Transverse colon (tissue), 4 donors: ENCODE measurements at regions of chr6 and their contacts with region 1.

Region 1: DNA sequence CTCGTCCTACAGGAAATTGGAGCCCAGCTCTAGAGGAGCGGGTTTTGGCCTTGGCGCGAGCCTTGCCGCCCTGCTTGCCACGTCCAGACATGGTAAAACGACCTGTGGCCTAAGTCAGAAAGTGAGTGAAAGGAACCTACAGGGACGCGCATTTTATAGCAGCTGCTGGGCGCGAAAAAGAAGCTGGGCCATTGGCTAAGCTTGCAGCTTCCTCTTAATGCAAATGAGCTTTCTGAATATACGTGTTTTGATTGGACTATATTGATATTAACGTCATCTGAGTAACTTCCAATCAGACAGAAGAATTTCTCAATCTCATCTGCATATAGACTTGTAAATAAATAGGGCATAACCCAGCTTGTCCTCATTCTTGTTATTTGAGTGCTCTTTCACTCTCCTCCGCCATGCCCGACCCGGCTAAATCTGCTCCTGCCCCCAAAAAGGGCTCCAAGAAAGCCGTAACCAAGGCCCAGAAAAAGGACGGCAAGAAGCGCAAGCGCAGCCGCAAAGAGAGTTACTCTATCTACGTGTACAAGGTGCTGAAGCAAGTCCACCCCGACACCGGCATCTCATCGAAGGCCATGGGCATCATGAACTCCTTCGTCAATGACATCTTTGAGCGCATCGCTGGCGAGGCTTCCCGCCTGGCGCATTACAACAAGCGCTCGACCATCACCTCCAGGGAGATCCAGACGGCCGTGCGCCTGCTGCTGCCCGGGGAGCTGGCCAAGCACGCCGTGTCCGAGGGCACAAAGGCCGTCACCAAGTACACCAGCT is 18.9 kb downstream of the OR2B2 start:
- DNase-seq: peak; percentile 93
- H3K4me3 ChIP-seq: peak overlapping the region; percentile 23 to 80 (median 63)
- H3K27ac ChIP-seq: peak overlapping the region; percentile 90 to 96 (median 92)
- H3K4me1 ChIP-seq: peaks cover 0 to 54% (median 22%) of the 10 kb centered on the region in 4 donors
- H3K27me3 ChIP-seq: peaks cover 47% of the 10 kb centered on the region
- CTCF ChIP-seq: peak in 1 of 5 experiments; percentile 28
- EP300 ChIP-seq: no peak
- POLR2A ChIP-seq: peak; percentile 99

Region 2: DNA sequence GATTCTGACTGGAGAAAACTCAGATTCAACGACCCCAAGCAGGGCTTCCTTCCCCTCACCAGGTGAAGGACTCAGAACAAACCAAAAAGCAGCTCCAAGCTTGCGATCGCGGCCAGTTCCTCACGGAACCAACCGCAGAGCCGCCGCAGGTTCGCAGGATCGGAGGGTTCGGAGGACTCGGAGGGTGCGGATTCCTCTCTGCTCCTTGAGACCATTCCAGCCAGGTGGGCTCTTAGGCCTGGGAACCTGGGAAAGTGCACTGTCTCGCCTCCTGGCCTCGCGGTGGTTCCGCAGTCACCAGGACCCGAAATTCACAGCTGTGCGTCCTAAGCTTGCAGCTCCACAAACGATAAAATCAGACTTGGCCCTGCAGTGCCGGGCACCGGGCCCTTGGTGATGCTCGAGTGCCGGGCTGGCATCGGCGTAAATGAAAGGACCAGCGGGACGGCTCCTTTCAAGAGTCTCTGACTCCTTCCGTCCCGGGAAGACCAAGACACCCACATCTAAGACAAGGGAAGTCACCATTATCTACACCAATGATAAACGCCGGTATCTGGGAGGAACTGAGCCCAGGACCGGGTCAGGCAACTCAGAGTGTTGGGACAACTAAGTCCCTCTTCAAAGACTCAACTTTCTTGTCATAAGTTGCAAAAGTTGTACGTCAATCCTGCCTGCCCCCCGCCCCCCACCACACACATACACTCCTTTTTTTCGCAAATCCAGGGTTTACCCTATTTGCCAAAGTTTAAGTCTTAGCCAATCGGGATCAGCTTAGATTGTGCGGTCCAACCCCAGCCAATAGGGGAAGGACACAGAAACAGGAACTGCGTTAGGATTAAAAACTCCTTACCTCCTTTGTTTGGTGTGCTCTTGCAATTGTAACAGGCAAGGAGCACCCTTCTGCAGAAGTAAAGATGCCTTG is 715.5 kb before region 1 on chr6:
- in situ Hi-C with region 1: loop called in 3 of 4 experiments (anchors 10 kb)
- intact Hi-C with region 1: no loop called
- DNase-seq: peak; percentile 88
- H3K4me3 ChIP-seq: peak overlapping the region; percentile 80 to 96 (median 88)
- H3K27ac ChIP-seq: peak overlapping the region; percentile 91 to 96 (median 92)
- H3K4me1 ChIP-seq: peaks cover 0 to 17% (median 3%) of the 10 kb centered on the region in 4 donors
- H3K27me3 ChIP-seq: no peaks in the 10 kb centered on the region
- CTCF ChIP-seq: peak; percentile 39 to 72 (median 52)
- EP300 ChIP-seq: no peak
- POLR2A ChIP-seq: peak; percentile 59

Region 3: DNA sequence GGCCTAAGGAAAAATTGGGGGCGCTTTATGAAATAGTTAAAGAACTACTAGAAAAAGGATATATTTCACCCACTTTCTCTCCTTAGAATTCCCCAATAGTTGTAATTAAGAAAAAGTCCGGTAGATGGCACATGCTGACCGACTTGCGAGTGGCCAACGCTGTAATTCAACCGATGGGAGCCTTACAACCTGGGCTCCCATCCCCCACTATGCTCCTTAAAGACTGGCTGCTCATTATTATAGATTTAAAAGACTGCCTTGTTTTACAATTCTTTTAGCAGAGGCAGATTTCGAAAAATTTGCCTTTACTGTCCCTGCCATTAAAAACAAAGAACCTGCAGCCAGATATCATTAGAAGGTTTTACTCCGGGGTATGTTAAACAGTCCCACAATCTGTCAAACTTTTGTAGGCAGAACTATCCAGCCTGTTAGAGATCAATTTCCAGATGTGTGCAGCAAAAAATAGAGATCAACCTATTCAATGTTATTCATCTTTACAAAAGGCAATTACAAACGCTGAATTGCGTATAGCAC is 704.3 kb before region 1 on chr6:
- in situ Hi-C with region 1: no loop called
- intact Hi-C with region 1: loop called (anchors 5 kb)
- DNase-seq: peak; percentile 74
- H3K4me3 ChIP-seq: peak overlapping the region; percentile 41 to 68 (median 59)
- H3K27ac ChIP-seq: peak overlapping the region; percentile 86 to 91 (median 88)
- H3K4me1 ChIP-seq: peaks cover 0 to 7% (median 4%) of the 10 kb centered on the region in 4 donors
- H3K27me3 ChIP-seq: no peaks in the 10 kb centered on the region
- CTCF ChIP-seq: peak; percentile 74 to 85 (median 78)
- EP300 ChIP-seq: no peak
- POLR2A ChIP-seq: no peak

Region 4: DNA sequence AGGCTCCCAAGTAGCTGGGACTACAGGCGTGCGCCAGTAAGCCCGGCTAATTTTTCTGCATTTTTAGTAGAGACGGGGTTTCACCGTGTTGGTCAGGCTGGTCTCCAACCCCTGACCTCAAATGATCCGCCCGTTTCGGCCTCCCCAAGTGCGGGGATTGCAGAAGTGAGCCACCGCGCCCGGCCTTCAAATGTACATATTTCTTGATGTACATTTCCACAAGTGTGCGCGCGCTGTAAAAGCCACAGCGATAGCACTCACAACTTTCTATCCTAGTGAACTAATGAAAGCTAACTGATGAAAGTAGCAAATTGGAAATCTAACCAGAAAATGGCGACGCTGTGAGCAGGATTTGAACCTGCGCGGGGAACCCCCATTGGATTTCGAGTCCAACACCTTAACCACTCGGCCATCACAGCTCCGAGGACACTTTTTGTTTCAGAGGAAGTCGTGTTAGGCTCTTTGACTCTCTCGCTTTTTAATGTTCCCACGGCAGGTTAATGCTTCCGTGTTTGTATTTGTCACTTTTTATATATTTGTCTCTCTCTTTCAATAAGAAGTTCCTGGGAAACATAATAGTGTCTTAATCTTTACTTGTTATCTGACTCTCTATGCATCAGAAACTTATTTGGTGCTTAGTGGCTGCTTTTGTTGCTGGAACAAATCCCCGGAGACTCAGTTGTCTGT is 221.0 kb before region 1 on chr6:
- in situ Hi-C with region 1: no loop called
- intact Hi-C with region 1: no loop called
- DNase-seq: peak; percentile 14
- H3K4me3 ChIP-seq: no peak overlapping the region
- H3K27ac ChIP-seq: no peak overlapping the region
- H3K4me1 ChIP-seq: peaks cover 0 to 12% (median 7%) of the 10 kb centered on the region in 4 donors
- H3K27me3 ChIP-seq: peaks cover 100% of the 10 kb centered on the region
- CTCF ChIP-seq: no peak
- EP300 ChIP-seq: no peak
- POLR2A ChIP-seq: no peak

Region 5: DNA sequence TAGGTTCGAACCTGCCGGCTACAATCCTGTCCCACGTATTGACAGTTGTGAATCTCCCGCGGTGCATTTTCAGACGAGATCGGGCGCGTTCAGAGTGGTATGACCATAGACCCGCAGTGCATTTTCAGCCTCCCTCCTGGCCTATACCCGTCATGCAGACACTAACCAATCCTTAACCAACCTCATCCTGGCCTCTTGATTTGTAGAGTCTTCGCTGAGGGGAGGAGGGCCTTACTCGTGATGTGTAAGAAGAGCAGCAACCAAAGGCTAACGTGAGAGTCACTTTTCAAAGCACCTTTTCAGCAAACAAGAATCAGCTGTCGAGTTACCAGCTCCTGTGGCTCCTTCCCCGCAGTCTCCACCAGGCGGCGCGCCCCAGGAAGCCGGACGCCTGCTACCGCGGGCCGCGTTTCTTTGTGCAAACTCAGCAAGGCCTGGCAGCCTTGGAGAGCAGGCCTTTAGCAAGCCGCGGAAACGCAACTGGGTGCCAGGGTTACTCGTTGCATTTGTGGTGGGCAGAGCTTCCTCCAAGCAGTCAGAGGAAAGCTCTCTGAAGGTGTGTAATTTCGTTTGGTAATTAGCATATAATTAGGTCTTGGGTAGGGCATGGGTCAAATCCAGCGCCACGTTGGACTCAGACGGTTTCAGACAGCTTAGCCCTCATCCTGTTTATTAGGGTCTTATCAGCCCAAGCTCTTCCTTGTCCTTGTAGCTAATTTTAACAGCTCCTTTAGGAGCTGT is 120.8 kb before region 1 on chr6:
- in situ Hi-C with region 1: loop called in 2 of 4 experiments (anchors 10 kb)
- intact Hi-C with region 1: no loop called
- DNase-seq: peak; percentile 93
- H3K4me3 ChIP-seq: peak overlapping the region in 2 of 4 donors; percentile 2 to 9
- H3K27ac ChIP-seq: peak overlapping the region; percentile 79 to 89 (median 87)
- H3K4me1 ChIP-seq: peaks cover 0 to 50% (median 30%) of the 10 kb centered on the region in 4 donors
- H3K27me3 ChIP-seq: peaks cover 10% of the 10 kb centered on the region
- CTCF ChIP-seq: peak; percentile 93 to 98 (median 94)
- EP300 ChIP-seq: no peak
- POLR2A ChIP-seq: peak; percentile 33

Region 6: GRCh38 chr6:27809939-27810767 is 83.1 kb before region 1 on chr6:
- in situ Hi-C with region 1: loop called in 2 of 4 experiments (anchors 10 kb)
- intact Hi-C with region 1: no loop called
- DNase-seq: peak; percentile 89
- H3K4me3 ChIP-seq: peak overlapping the region; percentile 48 to 67 (median 53)
- H3K27ac ChIP-seq: peak overlapping the region; percentile 90 to 94 (median 92)
- H3K4me1 ChIP-seq: peaks cover 0 to 49% (median 22%) of the 10 kb centered on the region in 4 donors
- H3K27me3 ChIP-seq: peaks cover 5% of the 10 kb centered on the region
- CTCF ChIP-seq: no peak
- EP300 ChIP-seq: no peak
- POLR2A ChIP-seq: peak; percentile 100